Motor neuron (in vitro differentiated cells): ENCODE measurements at regions of chr5 and their contacts with region 1.

Region 1: GRCh38 chr5:172035039-172035438 is 28.6 kb upstream of the FBXW11 start:
- ATAC-seq: peak in 4 of 8 experiments; percentile 42 to 97 (median 88)
- H3K4me3 ChIP-seq: no peak overlapping the region
- H3K27ac ChIP-seq: no peak overlapping the region
- H3K4me1 ChIP-seq: peaks cover 6 to 7% of the 10 kb centered on the region in 2 donors

Region 2: GRCh38 chr5:171606414-171607024 is 428.5 kb before region 1 on chr5:
- in situ Hi-C with region 1: no loop called
- ATAC-seq: no peak
- H3K4me3 ChIP-seq: no peak overlapping the region
- H3K27ac ChIP-seq: no peak overlapping the region
- H3K4me1 ChIP-seq: peaks cover 0 to under 1% of the 10 kb centered on the region in 2 donors

Region 3: DNA sequence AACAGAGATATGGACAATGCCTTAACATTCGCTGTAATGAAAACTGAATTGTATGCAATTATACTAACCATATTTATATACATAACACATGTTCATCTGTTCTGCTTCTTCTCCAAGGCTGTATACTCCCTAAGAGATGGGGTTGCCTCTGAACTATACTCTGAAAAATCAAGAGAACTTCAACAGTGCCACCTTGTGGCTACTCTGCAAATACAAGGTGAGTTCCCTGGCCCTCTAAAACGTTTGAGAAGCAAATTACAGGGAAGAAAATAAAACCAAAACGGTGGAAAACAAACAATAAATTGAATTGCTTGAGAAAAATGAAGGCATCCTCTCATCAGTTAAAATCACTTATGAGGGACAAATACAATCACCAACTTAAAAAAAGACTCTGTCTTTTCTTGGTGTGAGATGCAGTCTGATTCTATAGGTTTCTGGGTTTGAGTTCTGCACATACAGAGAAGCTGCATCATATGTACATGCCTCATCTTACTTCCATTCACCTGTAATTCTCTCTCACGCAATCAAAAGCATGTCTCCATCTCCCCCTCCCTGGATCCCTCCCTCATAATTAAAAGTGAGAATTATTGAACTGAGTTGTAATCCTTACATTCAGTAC is 127.2 kb before region 1 on chr5:
- in situ Hi-C with region 1: loop called in 1 of 9 experiments (anchors 25 kb)
- ATAC-seq: peak; percentile 47 to 89 (median 78)
- H3K4me3 ChIP-seq: no peak overlapping the region
- H3K27ac ChIP-seq: no peak overlapping the region
- H3K4me1 ChIP-seq: peaks cover 0 to 5% of the 10 kb centered on the region in 2 donors

Region 4: DNA sequence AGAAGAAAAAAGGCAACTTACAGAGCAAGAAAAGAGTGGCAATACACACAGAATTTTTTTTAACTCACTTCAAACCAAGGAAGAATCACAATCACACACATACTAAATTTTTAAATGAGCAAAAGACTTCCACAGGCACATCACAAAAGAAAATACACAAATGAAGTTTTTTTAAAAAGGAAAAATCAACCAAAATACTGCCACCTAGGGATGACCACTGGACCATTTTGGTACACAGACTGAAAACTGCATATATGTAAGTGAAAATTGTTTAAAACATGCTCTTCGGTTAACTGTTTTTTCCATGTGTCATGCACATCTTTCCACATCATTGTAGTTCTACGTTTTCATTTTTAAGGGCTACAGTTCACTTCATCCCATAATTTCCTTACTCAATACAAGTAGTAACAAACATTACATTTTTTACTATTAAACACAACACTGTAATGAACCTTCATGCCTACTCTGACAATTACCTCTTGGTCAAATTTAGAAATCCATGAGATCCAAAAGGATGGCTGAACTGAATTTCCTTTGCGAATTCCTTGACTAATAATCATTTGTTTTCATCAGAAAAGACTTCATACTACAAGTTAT is 107.6 kb before region 1 on chr5:
- in situ Hi-C with region 1: loop called in 2 of 9 experiments (anchors 25 kb)
- ATAC-seq: no peak
- H3K4me3 ChIP-seq: no peak overlapping the region
- H3K27ac ChIP-seq: no peak overlapping the region
- H3K4me1 ChIP-seq: no peaks in the 10 kb centered on the region

Region 5: DNA sequence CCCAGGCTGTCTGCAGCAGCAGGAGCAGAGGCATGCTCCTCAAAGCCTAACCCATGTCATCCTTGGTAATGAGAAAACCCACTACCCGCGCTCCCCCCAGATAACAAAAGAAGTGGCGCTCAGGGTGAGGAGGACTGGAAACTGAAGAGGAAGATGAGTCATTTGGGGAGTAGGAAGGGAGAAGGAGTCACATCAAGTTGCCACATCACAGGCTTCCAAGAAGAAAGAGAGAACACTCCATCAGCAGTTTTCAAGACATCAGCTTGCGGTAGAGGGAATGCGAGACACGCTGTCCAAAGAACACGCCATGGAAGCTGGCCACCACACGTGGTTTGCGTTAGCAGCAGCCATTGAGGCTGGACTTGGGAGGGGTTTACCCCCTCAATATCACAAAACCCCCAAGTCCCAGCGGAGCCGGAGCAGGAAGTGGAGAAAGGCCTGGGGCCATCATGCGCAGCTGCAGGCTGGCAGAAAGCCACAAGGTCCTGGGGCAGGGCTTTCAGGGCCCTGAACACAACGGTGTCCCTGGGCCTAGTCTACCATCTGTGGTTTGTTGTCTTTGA is 377.8 kb after region 1 on chr5:
- in situ Hi-C with region 1: no loop called
- ATAC-seq: peak; percentile 7 to 70 (median 36)
- H3K4me3 ChIP-seq: no peak overlapping the region
- H3K27ac ChIP-seq: peak overlapping the region; percentile 20 to 51
- H3K4me1 ChIP-seq: peaks cover 35 to 36% of the 10 kb centered on the region in 2 donors